Motor neuron (in vitro differentiated cells): ENCODE measurements at regions of chr9 and their contacts with region 1.

Region 1: GRCh38 chr9:125143375-125144090 is at the start of gene SCAI:
- ATAC-seq: peak; percentile 98 to 99 (median 99)
- H3K4me3 ChIP-seq: peak within 1 kb of the TSS; percentile 76 to 89 (median 87)
- H3K27ac ChIP-seq: peak within 1 kb of the TSS; percentile 87
- H3K4me1 ChIP-seq: peaks cover 0 to 2% of the 10 kb centered on the region in 2 donors
- total RNA-seq, gene SCAI: 1.8 to 14.0 (median 10.2) TPM

Region 2: GRCh38 chr9:124940693-124941453 is 202.7 kb before region 1 on chr9 and contains the start of gene GOLGA1:
- in situ Hi-C with region 1: loop called in 2 of 9 experiments (anchors 25 kb)
- ATAC-seq: peak; percentile 83 to 93 (median 90)
- H3K4me3 ChIP-seq: peak within 1 kb of the TSS; percentile 47 to 97 (median 62)
- H3K27ac ChIP-seq: peak within 1 kb of the TSS; percentile 90 to 96
- H3K4me1 ChIP-seq: peaks cover 9 to 10% of the 10 kb centered on the region in 2 donors
- total RNA-seq, gene GOLGA1: 8.8 to 18.8 (median 14.3) TPM

Region 3: DNA sequence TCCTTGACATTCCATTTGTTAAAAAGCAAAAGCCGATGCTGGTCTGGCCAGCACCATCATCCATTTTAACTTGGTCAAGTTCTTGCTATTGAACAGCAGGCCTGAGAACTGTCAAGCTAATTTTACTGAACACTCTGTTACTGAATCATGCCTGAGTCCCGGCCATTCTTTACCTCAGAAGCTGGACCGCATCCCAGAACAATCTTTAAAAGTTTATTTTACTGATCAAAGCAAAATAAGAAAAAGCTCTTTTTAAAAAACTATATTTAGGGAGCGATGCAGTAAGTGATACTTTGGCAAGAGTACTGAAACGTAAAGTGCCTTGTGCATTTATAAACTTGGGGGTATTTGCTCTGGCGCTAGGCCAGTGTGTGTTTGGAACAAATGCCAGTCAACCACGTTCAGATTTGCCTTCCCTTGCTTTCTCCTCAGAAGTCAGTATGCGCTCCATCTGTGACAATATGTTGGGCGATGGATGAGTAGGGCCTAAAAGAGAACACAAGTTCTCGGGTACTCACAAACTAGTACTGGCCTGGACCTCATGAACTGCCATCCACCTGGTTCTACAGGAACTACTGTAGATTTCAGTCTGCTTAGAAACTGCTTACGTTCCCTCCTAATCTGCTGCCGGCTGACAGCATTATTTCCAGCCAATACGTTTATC is 401.6 kb after region 1 on chr9:
- in situ Hi-C with region 1: no loop called
- ATAC-seq: peak in 2 of 8 experiments; percentile 14 to 57
- H3K4me3 ChIP-seq: no peak overlapping the region
- H3K27ac ChIP-seq: peak overlapping the region in 1 of 2 donors; percentile 15
- H3K4me1 ChIP-seq: peaks cover 28 to 59% of the 10 kb centered on the region in 2 donors